ENCODE measurements at regions of chr9 and their contacts with region 1.

Region 1: DNA sequence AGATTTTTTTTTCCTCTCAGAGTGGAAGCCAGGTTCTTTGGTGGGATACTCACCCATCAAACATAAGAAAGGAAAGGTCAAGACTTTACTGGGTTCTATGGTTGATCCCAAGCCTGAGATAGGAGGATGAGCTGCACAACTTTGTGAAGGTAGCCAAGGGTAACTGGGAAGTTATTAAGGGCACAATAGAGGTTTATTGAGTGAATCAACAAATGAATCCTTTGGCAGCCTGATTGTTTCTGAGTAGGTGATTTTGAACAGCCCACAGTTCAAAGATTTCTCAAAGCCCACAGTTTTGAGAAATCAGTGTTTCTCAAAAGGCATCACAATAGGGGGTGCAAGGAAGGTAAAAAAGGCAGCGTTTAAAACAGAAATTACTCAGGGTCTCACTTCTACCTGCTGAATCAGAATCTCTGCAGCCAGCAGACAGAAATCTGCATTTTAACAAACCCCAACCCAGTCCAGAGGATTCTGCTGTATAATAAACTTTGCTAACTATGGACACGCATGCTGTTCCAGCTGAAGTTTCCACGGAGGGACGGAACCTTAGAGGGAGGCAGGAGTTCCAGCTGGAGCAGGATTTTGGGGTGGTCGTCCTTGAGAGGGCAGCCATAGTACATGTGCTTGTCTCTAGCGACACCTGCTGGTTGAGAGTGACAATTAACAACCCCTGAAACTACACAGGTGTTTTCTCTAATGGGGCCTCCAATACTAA is 32.7 kb upstream of the FSD1L start:
- DNase-seq: peak; percentile 75
- H3K4me3 ChIP-seq: no peak overlapping the region
- H3K27ac ChIP-seq: no peak overlapping the region
- H3K4me1 ChIP-seq: peaks cover 0 to 7% (median 4%) of the 10 kb centered on the region in 4 donors
- H3K27me3 ChIP-seq: no peaks in the 10 kb centered on the region
- CTCF ChIP-seq: peak; percentile 70 to 90 (median 87)
- EP300 ChIP-seq: no peak
- POLR2A ChIP-seq: no peak

Region 2: GRCh38 chr9:104765138-104765537 is 650.0 kb before region 1 on chr9:
- intact Hi-C with region 1: loop called (anchors 10 kb)
- DNase-seq: no peak
- H3K4me3 ChIP-seq: no peak overlapping the region
- H3K27ac ChIP-seq: no peak overlapping the region
- H3K4me1 ChIP-seq: peaks cover 0 to 12% (median 7%) of the 10 kb centered on the region in 4 donors
- H3K27me3 ChIP-seq: no peaks in the 10 kb centered on the region
- CTCF ChIP-seq: no peak
- EP300 ChIP-seq: no peak
- POLR2A ChIP-seq: no peak

Region 3: GRCh38 chr9:104863180-104863883 is 551.8 kb before region 1 on chr9:
- intact Hi-C with region 1: loop called (anchors 5 kb)
- DNase-seq: no peak
- H3K4me3 ChIP-seq: no peak overlapping the region
- H3K27ac ChIP-seq: peak overlapping the region; percentile 8 to 79 (median 67)
- H3K4me1 ChIP-seq: peaks cover 0 to 79% (median 75%) of the 10 kb centered on the region in 4 donors
- H3K27me3 ChIP-seq: no peaks in the 10 kb centered on the region
- CTCF ChIP-seq: peak in 3 of 4 experiments; percentile 62 to 70 (median 67)
- EP300 ChIP-seq: no peak
- POLR2A ChIP-seq: no peak

Region 4: DNA sequence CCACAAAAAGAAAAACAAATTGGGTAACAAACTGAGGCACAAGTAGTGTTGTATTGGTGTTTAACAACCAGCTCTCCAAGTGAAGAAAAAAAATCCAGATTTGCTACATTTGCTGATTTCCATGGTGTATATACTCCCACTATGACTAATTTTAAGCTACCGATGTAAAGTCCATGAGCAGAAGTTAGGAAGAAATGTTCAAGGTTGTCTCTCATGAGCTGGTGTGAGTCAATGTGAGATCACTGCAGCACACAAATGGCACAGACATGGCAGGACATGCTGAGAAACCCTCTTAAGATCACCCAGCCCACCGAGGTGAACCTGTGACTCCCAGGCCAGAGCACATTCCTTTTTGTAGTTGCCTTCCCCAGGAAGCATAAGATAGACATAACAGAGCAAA is 134.4 kb before region 1 on chr9:
- intact Hi-C with region 1: no loop called
- DNase-seq: no peak
- H3K4me3 ChIP-seq: no peak overlapping the region
- H3K27ac ChIP-seq: no peak overlapping the region
- H3K4me1 ChIP-seq: no peaks in the 10 kb centered on the region
- H3K27me3 ChIP-seq: no peaks in the 10 kb centered on the region
- CTCF ChIP-seq: no peak
- EP300 ChIP-seq: no peak
- POLR2A ChIP-seq: no peak

Region 5: GRCh38 chr9:105475302-105475701 is 60.2 kb after region 1 on chr9:
- intact Hi-C with region 1: no loop called
- DNase-seq: no peak
- H3K4me3 ChIP-seq: no peak overlapping the region
- H3K27ac ChIP-seq: no peak overlapping the region
- H3K4me1 ChIP-seq: no peaks in the 10 kb centered on the region
- H3K27me3 ChIP-seq: no peaks in the 10 kb centered on the region
- CTCF ChIP-seq: no peak
- EP300 ChIP-seq: no peak
- POLR2A ChIP-seq: no peak

Region 6: DNA sequence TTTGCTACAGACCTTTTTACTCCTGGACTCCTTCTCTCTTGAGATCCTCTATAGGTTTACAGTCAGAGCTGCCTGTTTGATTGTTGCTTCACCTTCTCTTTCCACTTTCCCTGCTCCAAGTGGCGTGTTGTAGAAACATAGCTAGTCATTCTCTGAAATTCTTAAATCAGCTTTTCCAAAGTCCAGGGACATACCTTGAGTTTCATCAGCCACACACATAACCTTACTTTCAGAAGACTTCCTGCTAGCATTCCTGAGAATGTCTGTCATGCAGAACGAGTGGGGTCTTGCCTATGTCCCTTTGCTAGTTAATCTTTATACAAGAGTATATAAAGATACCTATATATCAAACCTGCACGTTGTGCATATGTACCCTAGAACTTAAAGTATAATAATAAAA is 1217.5 kb after region 1 on chr9:
- intact Hi-C with region 1: no loop called
- DNase-seq: no peak
- H3K4me3 ChIP-seq: no peak overlapping the region
- H3K27ac ChIP-seq: no peak overlapping the region
- H3K4me1 ChIP-seq: peaks cover 0 to 2% (median under 1%) of the 10 kb centered on the region in 4 donors
- H3K27me3 ChIP-seq: no peaks in the 10 kb centered on the region
- CTCF ChIP-seq: no peak
- EP300 ChIP-seq: no peak
- POLR2A ChIP-seq: no peak